ENCODE measurements at regions of chr11 and their contacts with region 1.

Region 1: GRCh38 chr11:120335908-120336640 is at the start of gene ARHGEF12:
- DNase-seq: peak; percentile 100
- H3K4me3 ChIP-seq: peak within 1 kb of the TSS; percentile 75
- H3K27ac ChIP-seq: peak within 1 kb of the TSS; percentile 86
- H3K4me1 ChIP-seq: peaks cover 38% of the 10 kb centered on the region
- H3K27me3 ChIP-seq: no peaks in the 10 kb centered on the region
- CTCF ChIP-seq: peak; percentile 78
- total RNA-seq, gene ARHGEF12: 122 and 132 TPM in 2 replicates

Region 2: GRCh38 chr11:120285256-120285655 is 50.8 kb before region 1 on chr11:
- CTCF ChIA-PET with region 1: no interaction called
- POLR2A ChIA-PET with region 1: no interaction called
- intact Hi-C with region 1: no loop called
- DNase-seq: no peak
- H3K4me3 ChIP-seq: no peak overlapping the region
- H3K27ac ChIP-seq: no peak overlapping the region
- H3K4me1 ChIP-seq: no peaks in the 10 kb centered on the region
- H3K27me3 ChIP-seq: no peaks in the 10 kb centered on the region
- CTCF ChIP-seq: no peak

Region 3: DNA sequence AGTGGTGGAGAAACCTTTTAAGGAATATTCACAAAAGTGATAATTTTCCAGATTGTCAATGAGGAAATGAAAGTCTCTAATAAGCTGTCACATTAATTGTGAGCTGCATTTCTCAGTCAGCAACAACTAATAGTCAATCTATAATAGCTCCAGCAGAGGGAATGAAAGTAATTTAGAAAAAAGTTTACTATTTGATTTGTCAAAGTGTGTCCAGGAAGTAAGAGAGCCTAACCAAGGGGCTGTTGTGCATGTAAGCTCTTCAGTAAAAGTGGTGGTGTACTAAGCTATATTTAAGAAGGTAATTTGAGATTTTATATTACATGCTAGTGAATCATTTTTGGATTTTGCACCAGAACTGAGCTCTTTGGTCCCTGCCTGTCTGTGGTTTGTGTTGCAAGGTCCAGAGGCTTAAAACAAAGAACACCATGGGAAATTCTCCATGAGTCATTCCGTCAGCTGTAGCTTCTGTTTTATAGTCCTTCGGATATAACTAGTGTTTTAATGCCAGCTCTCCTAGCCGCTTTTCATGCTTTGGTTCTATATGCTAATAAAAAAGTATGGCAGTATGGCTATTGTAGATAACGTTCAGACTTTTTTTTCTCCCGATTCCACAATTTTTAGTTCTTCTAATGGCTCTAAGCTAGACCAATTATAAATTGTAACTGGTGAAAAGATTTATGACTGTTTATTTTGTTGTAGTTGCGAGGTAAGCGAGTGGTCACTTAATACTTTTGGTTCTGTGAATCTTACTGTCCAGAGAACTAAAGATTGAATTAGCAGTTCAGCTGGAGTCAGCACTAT is 64.7 kb after region 1 on chr11:
- CTCF ChIA-PET with region 1: no interaction called
- POLR2A ChIA-PET with region 1: no interaction called
- intact Hi-C with region 1: loop called (anchors 5 kb)
- DNase-seq: peak; percentile 93
- H3K4me3 ChIP-seq: peak overlapping the region; percentile 41
- H3K27ac ChIP-seq: peak overlapping the region; percentile 78
- H3K4me1 ChIP-seq: peaks cover 71% of the 10 kb centered on the region
- H3K27me3 ChIP-seq: no peaks in the 10 kb centered on the region
- CTCF ChIP-seq: no peak

Region 4: DNA sequence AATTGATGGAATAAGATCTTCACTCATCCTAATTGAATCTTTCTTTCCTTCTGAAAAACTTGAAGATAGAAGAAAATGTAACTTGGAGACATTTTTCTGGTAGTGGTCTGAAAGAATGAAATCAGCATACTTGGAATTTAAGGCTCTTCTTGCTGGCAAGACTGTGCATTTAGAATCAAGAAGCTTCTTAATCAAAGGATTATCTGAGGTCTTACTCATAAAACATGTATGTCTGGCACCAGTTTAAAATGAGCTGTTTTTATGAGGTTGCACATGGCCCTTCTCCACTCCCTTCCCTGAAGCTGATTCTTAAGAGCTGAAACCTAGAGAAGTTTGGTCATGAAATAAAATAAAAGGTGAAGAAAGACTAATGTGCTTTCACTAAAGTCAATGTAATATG is 77.4 kb after region 1 on chr11:
- CTCF ChIA-PET with region 1: no interaction called
- POLR2A ChIA-PET with region 1: no interaction called
- intact Hi-C with region 1: no loop called
- DNase-seq: peak; percentile 76
- H3K4me3 ChIP-seq: no peak overlapping the region
- H3K27ac ChIP-seq: peak overlapping the region; percentile 16
- H3K4me1 ChIP-seq: peaks cover 22% of the 10 kb centered on the region
- H3K27me3 ChIP-seq: no peaks in the 10 kb centered on the region
- CTCF ChIP-seq: no peak

Region 5: DNA sequence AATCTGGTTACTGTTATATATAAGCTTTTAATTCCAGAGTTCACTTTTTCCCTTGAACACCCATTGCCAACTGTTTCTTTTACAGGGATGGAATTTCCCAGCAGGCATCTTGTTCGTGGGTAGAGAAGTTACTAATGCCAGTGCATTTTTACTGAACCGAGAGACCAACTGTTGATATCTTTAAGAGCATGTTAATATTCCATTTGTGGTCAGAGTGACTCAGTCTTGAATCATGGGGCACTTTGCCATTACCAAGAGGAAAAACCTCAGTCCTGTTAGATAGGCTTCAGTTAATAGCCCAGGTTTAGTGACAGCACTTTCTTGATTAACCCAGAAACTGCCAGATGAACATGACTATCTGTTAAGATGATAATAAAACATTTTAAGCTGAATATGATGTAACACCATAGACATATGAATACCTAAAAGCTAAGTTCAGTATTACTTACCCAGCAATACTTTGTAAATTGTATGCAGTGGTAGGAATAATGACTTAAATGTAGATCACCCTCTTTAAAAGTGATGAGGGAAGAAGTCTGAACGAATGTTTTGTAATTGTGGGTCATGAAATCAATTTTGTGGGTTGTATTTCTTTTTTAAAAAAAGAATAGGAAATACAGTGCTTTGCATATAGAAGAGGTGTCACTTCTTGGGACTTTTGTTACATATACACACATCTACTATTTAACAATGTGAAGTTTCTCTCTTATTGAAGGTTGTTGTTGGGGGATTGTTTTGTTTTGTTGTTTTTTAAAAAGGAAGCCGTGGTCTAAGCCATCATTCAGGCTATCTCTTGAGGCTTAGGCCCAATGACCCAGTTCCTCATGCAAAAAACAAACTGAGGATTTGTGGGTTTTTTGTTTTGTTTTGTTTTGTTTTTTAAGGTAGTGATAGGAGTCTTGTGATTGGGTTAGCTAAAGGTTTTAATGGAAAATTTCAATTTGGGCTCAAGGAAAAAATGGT is 96.3 kb after region 1 on chr11:
- CTCF ChIA-PET with region 1: interaction called, 4 read pairs
- POLR2A ChIA-PET with region 1: no interaction called
- intact Hi-C with region 1: loop called (anchors 5 kb)
- DNase-seq: peak; percentile 92
- H3K4me3 ChIP-seq: no peak overlapping the region
- H3K27ac ChIP-seq: peak overlapping the region; percentile 62
- H3K4me1 ChIP-seq: peaks cover 8% of the 10 kb centered on the region
- H3K27me3 ChIP-seq: no peaks in the 10 kb centered on the region
- CTCF ChIP-seq: no peak

Region 6: DNA sequence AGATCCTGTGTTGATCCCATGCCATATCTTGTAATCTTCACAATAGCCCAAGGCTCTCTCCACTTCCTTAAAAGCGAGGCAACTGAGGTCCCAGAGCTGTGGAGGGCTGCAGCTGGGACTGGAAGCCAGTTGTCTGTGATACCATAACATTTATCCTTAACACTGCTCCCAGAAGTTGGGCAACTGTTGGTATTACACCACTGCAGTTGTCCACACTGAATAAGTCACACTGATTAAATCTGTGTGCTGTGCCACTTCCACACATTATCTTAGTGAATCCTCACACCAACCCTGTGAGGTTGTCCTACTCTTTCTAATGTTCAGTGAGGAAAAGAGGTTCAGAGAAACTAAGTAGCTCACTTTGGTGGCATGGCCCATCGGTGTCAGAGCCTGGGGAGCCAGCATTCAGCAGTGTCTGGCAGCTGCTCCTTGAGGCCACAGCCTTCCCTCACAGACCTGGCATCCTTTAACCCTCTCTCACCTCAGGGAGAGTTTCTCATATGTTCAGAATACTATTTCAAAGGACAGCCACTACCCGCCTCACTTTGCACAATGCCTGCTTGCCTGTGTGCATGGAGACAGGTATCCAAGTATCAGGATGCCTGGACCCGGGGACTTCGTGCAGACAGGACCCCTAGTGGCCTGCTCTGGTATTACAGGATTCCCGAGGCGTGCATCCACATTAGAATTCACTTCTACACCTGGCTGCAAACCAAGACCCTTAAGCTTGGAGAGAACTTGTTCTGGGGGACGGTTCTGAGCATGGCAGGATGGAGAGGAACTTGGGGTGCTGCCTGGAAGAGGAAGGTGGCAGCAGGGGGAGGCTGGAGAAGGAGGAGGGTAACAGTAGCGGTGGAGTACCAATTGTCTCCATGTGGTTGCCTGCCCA is 466.0 kb after region 1 on chr11:
- CTCF ChIA-PET with region 1: no interaction called
- POLR2A ChIA-PET with region 1: interaction called, 7 read pairs
- intact Hi-C with region 1: loop called (anchors 10 kb)
- DNase-seq: peak; percentile 65
- H3K4me3 ChIP-seq: no peak overlapping the region
- H3K27ac ChIP-seq: no peak overlapping the region
- H3K4me1 ChIP-seq: no peaks in the 10 kb centered on the region
- H3K27me3 ChIP-seq: peaks cover 5% of the 10 kb centered on the region
- CTCF ChIP-seq: peak; percentile 95

Region 7: DNA sequence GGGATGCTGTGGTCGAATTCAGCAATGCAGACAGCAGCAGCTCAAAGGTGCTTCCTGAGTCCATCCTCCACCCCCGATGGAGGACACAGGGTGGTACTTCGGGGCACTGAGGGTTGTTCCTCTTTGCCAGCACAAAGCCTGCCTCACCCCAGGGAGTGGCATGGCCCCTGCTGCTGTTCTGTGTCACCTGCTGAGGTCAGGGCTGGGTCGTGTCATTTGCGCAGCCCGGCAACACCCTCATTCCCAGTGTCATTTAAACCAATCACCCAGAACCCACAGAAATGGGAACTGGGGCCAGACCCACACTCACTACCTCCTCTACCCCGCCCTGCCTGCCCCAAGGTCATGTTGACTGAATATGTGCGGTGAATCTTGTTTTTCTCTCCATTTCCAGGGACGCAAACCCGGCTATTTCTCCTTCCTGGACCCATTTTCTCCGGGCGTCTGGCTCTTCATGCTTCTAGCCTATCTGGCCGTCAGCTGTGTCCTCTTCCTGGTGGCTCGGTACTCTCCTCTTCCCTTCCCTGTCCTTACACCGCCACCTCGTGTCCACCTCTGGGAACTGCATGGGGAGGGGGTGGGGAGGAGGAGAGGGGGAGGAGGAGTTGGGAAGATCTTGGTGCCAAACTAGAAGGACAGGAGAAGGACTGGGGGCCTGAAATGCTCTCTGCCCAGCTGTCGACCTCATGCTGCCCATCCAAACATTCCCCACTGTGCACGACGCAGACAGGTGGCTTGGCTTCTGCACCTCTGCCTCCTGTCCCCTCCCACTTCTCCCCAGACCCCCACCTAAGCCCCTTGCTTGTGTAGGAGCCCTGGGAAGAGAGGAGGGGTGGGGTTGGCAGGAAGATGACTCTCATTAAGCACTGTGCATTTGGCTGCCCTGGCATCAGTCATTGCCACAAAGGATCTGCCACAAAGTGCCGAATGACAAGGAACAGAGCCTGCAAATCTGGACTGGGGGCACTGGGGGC is 616.7 kb after region 1 on chr11:
- CTCF ChIA-PET with region 1: no interaction called
- POLR2A ChIA-PET with region 1: no interaction called
- intact Hi-C with region 1: loop called (anchors 10 kb)
- DNase-seq: peak; percentile 92
- H3K4me3 ChIP-seq: peak overlapping the region; percentile 4
- H3K27ac ChIP-seq: no peak overlapping the region
- H3K4me1 ChIP-seq: no peaks in the 10 kb centered on the region
- H3K27me3 ChIP-seq: peaks cover 37% of the 10 kb centered on the region
- CTCF ChIP-seq: peak; percentile 93

Region 8: DNA sequence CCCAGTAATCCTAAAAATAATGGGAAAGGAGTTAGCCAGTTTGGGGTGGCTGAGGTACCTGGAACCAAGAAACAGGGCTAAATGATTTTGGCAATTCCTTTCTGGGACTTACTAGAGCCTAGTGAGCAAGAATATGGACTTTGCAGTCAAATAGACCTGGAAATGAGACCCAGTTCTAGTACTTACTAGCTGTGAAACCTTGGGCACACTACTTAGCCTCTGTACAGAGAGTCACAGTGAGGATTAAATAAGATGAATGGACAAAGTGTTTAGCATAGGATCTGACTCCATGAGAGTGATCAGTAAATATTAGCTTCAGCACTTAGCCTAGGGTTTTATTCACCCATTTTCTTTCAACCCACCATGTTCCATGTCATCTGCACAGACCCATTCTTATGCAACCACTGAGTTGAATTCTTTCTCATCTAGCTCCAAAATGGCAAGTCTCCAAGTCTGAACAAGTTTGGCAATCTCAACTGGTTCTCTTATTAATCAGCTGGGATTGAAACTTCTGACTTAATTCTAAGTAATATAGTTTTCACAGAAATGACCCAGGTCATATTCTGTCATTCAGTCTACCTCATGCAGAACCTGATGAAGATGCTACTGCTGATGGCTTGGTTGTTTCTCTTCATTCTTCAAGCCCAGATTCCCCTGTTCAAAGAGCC is 1101.1 kb after region 1 on chr11:
- CTCF ChIA-PET with region 1: no interaction called
- POLR2A ChIA-PET with region 1: no interaction called
- intact Hi-C with region 1: no loop called
- DNase-seq: no peak
- H3K4me3 ChIP-seq: no peak overlapping the region
- H3K27ac ChIP-seq: no peak overlapping the region
- H3K4me1 ChIP-seq: peaks cover 7% of the 10 kb centered on the region
- H3K27me3 ChIP-seq: no peaks in the 10 kb centered on the region
- CTCF ChIP-seq: no peak